ENCODE measurements at regions of chr3 and their contacts with region 1.

Region 1: DNA sequence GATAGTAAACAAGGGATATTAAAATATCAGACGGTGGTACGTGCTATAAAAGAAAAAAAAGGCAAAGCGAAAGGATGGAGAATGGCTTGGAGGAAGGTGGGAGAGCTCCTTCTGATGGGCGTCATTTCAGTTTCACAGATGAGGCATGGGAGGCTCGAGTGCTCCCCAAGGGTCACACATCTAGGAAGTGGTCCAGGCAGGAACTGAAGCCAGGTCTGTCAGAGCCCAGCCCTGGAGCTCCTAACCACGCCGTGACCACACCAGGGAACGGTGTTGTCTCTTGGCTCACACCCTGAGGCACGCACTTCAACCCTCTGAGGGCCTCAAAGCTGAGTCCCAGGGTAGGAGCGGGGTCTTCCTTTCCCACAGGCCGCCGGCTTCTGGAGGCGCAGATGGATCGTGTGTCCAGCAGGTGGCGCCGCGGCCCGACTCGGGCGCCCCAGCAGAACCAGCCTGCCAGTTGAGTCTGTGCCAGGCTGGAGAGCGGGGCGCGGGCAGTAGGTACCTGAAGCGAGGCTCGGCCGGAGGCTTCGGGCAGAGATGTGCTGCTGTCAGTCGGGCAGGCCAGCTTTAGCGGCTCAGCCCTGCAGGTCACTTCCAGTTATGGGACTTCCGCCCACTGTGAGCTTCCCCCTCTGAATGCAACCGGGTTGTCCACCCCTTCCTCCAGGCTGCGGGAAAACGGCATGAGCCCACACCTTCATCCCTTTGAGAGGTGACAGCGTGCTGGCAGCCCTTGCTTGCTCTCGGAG is 68.1 kb downstream of the SLC6A1 start:
- DNase-seq: peak; percentile 8
- H3K4me3 Mint-ChIP-seq: no peak overlapping the region
- H3K27ac Mint-ChIP-seq: no peak overlapping the region
- H3K4me1 Mint-ChIP-seq: no peaks in the 10 kb centered on the region
- H3K27me3 Mint-ChIP-seq: peaks cover 3% of the 10 kb centered on the region

Region 2: GRCh38 chr3:10945683-10946287 is 114.9 kb before region 1 on chr3:
- intact Hi-C with region 1: loop called (anchors 1 kb)
- DNase-seq: peak; percentile 17
- H3K4me3 Mint-ChIP-seq: no peak overlapping the region
- H3K27ac Mint-ChIP-seq: no peak overlapping the region
- H3K4me1 Mint-ChIP-seq: no peaks in the 10 kb centered on the region
- H3K27me3 Mint-ChIP-seq: peaks cover 3% of the 10 kb centered on the region

Region 3: GRCh38 chr3:11201246-11202024 is 140.8 kb after region 1 on chr3:
- intact Hi-C with region 1: loop called (anchors 10 kb)
- DNase-seq: no peak
- H3K4me3 Mint-ChIP-seq: no peak overlapping the region
- H3K27ac Mint-ChIP-seq: no peak overlapping the region
- H3K4me1 Mint-ChIP-seq: peaks cover 6% of the 10 kb centered on the region
- H3K27me3 Mint-ChIP-seq: peaks cover 14% of the 10 kb centered on the region

Measured in activated T-helper 1 cell treated with anti-CD3 and anti-CD28 coated beads, Interleukin-12 subunit alpha, Interleukin-12 subunit beta, Interleukin-2, Interleukin-4 antibody, amounts not matched to agents 30 ng/mL and 10 ng/mL and 1 ng/mL, durations not matched to agents 14 hours and 24 hours and 36 hours (primary cell).